Transverse colon (tissue), 4 donors: ENCODE measurements at regions of chrX and their contacts with region 1.

Region 1: DNA sequence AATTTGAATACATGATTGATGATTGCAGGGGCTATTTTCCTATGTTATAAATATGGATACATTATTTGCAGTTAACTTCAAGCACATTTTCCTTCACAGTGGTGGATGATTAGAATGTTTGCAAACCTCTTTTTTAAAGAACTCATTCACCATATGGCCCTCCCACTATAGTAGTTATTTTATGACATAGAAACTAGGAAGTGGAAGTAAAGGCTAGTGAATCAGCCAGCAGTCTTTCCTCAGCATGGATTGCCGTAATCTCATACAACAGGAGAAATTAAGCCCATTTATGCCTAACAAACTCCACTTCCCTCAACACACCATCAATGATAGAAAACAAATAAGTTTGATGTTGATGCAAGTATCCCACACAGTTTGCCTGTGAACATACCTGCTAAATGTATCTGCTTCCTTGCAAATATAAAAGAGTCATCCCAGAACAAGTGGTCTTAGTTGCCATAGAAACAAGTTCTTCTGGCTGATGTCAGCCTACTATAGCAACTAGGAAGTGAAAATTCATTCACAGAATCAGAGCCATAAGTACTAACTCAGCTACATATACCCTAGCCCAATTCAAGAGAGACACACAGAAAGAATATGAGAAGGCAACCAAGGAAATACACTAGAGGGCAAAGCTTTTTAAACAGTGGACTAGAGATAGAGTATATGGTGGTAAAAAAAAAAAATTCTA is 100.9 kb upstream of the RADX start:
- DNase-seq: no peak
- H3K4me3 ChIP-seq: no peak overlapping the region
- H3K27ac ChIP-seq: no peak overlapping the region
- H3K4me1 ChIP-seq: no peaks in the 10 kb centered on the region
- H3K27me3 ChIP-seq: no peaks in the 10 kb centered on the region
- CTCF ChIP-seq: no peak
- EP300 ChIP-seq: no peak
- POLR2A ChIP-seq: no peak

Region 2: GRCh38 chrX:106499473-106499872 is 11.4 kb before region 1 on chrX:
- in situ Hi-C with region 1: no loop called
- intact Hi-C with region 1: loop called (anchors 1 kb)
- DNase-seq: no peak
- H3K4me3 ChIP-seq: no peak overlapping the region
- H3K27ac ChIP-seq: no peak overlapping the region
- H3K4me1 ChIP-seq: no peaks in the 10 kb centered on the region
- H3K27me3 ChIP-seq: no peaks in the 10 kb centered on the region
- CTCF ChIP-seq: no peak
- EP300 ChIP-seq: no peak
- POLR2A ChIP-seq: no peak

Region 3: GRCh38 chrX:108029928-108030711 is 1519.3 kb after region 1 on chrX:
- in situ Hi-C with region 1: no loop called
- intact Hi-C with region 1: no loop called
- DNase-seq: no peak
- H3K4me3 ChIP-seq: no peak overlapping the region
- H3K27ac ChIP-seq: no peak overlapping the region
- H3K4me1 ChIP-seq: peaks cover 0 to 21% (median 3%) of the 10 kb centered on the region in 4 donors
- H3K27me3 ChIP-seq: no peaks in the 10 kb centered on the region
- CTCF ChIP-seq: no peak
- EP300 ChIP-seq: no peak
- POLR2A ChIP-seq: no peak